Caco-2 (cell line): ENCODE measurements at regions of chr3 and their contacts with region 1.

Region 1: GRCh38 chr3:136196401-136197158 is 445 bp upstream of the MSL2 start:
- DNase-seq: peak; percentile 98 to 99
- H3K4me3 ChIP-seq: peak overlapping the region; percentile 75
- H3K4me3 Mint-ChIP-seq: peak overlapping the region; percentile 86
- H3K27ac Mint-ChIP-seq: peak overlapping the region; percentile 98
- H3K4me1 ChIP-seq: peaks cover 12% of the 10 kb centered on the region; the same call in 1 of the 2 replicates
- H3K4me1 Mint-ChIP-seq: no peaks in the 10 kb centered on the region
- H3K27me3 ChIP-seq: no peaks in the 10 kb centered on the region
- H3K27me3 Mint-ChIP-seq: no peaks in the 10 kb centered on the region
- CTCF ChIP-seq: no peak

Region 2: GRCh38 chr3:136075218-136075808 is 121.3 kb before region 1 on chr3:
- CTCF ChIA-PET with region 1: interaction called, 11 read pairs
- POLR2A ChIA-PET with region 1: no interaction called
- intact Hi-C with region 1: loop called (anchors 2 kb)
- DNase-seq: peak; percentile 61 to 69
- H3K4me3 ChIP-seq: no peak overlapping the region
- H3K4me3 Mint-ChIP-seq: no peak overlapping the region
- H3K27ac Mint-ChIP-seq: peak overlapping the region; percentile 15
- H3K4me1 ChIP-seq: peaks cover 13% of the 10 kb centered on the region
- H3K4me1 Mint-ChIP-seq: peaks cover 9% of the 10 kb centered on the region
- H3K27me3 ChIP-seq: no peaks in the 10 kb centered on the region
- H3K27me3 Mint-ChIP-seq: no peaks in the 10 kb centered on the region
- CTCF ChIP-seq: peak; percentile 78 to 86

Region 3: DNA sequence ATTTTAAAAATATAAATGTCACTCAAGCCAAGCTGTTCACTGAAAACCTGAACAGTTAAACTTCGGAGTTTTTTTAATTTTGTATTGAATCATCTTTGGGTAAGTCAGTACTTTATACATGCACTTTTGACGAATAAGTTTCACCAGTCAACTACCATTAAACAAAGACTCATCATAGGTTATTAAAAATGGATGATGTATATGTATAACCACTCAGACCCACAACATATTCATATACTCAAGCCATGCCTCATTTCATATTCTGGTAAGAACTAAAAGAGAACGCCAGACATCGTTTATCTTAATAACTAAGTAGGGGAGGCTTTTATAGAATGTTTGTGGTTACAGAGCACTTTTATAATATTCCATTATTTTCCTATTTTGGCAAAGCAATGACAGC is 18.7 kb before region 1 on chr3:
- CTCF ChIA-PET with region 1: no interaction called
- POLR2A ChIA-PET with region 1: interaction called, 13 read pairs
- intact Hi-C with region 1: no loop called
- DNase-seq: no peak
- H3K4me3 ChIP-seq: no peak overlapping the region
- H3K4me3 Mint-ChIP-seq: no peak overlapping the region
- H3K27ac Mint-ChIP-seq: no peak overlapping the region
- H3K4me1 ChIP-seq: 0 out of 2 replicates have a peak, but pooled peaks cover 6% of the 10 kb centered on the region
- H3K4me1 Mint-ChIP-seq: peaks cover 8% of the 10 kb centered on the region
- H3K27me3 ChIP-seq: no peaks in the 10 kb centered on the region
- H3K27me3 Mint-ChIP-seq: no peaks in the 10 kb centered on the region
- CTCF ChIP-seq: no peak

Region 4: DNA sequence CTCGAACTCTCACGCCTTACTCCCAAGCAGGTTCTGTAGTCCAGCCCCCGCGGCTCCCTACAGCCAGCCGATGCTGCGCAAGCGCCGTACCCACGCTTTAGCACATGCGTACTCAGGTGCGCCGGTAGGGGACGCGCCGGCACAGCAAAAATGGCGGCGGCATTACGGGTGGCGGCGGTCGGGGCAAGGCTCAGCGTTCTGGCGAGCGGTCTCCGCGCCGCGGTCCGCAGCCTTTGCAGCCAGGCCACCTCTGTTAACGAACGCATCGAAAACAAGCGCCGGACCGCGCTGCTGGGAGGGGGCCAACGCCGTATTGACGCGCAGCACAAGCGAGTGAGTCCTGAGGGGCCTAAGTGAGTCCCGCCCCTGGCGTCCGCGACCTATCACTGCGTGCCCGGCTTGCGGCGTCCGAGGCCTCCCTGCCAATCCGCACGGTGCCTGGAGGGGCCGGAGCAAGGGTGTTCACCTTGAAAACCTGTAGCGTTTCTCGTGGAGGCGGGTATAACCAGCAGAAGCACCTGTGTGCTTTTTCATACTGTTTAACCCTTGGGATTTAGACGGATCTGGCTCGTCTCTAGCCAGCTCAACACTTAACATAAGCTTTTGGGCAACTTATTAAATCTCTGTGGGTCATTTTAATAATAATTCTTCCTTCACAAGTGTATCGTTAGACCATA is 53.8 kb after region 1 on chr3 and contains the start of gene PCCB:
- CTCF ChIA-PET with region 1: interaction called, 14 read pairs
- POLR2A ChIA-PET with region 1: interaction called, 17 read pairs
- intact Hi-C with region 1: loop called (anchors 1 kb)
- DNase-seq: peak; percentile 97 to 98
- H3K4me3 ChIP-seq: peak within 1 kb of the TSS; percentile 44
- H3K4me3 Mint-ChIP-seq: peak within 1 kb of the TSS; percentile 80
- H3K27ac Mint-ChIP-seq: peak within 1 kb of the TSS; percentile 99
- H3K4me1 ChIP-seq: peaks cover 33% of the 10 kb centered on the region
- H3K4me1 Mint-ChIP-seq: peaks cover 33% of the 10 kb centered on the region
- H3K27me3 ChIP-seq: no peaks in the 10 kb centered on the region
- H3K27me3 Mint-ChIP-seq: no peaks in the 10 kb centered on the region
- CTCF ChIP-seq: peak; percentile 76 to 87
- total RNA-seq, gene PCCB: 39.7 and 45.5 TPM in 2 replicates

Region 5: GRCh38 chr3:136343446-136344281 is 147.1 kb after region 1 on chr3:
- CTCF ChIA-PET with region 1: no interaction called
- POLR2A ChIA-PET with region 1: no interaction called
- intact Hi-C with region 1: loop called (anchors 10 kb)
- DNase-seq: peak; percentile 20 to 41
- H3K4me3 ChIP-seq: no peak overlapping the region
- H3K4me3 Mint-ChIP-seq: no peak overlapping the region
- H3K27ac Mint-ChIP-seq: no peak overlapping the region
- H3K4me1 ChIP-seq: peaks cover 9% of the 10 kb centered on the region
- H3K4me1 Mint-ChIP-seq: no peaks in the 10 kb centered on the region
- H3K27me3 ChIP-seq: no peaks in the 10 kb centered on the region
- H3K27me3 Mint-ChIP-seq: no peaks in the 10 kb centered on the region
- CTCF ChIP-seq: no peak